Naive thymus-derived CD4-positive, alpha-beta T cell (primary cell): ENCODE measurements at regions of chr9 and their contacts with region 1.

Region 1: DNA sequence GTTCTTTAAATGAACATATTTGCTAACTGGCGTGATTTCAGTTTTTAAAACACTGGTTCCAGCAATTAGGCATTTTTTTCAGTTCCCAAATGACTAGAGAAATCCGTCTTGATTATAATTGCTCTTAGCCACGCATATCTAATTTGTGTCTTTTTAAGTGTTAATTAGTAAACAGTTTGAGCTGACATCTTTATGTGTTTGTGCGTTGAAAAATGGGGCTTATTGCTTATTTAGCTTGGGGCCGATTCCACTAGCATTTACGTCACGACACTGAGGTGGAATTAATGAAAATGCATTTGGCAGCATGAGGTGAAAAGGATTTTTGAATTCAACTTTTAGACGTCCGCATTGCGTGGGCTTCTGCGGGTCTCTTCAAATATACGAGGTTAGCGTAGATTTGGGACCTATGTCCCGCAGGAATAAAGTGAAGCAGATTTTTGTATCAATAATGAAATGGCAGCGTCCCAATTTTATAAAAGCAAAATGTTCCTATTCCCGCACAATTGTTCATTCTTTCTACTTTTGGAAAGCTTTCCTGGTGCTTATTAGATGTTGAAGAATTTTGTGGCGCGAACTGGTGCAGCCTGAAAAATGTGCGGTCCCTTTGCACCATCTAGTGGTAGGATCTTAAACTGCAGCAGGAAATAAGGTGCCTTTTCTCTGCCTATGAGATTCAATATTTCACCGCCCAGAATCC is 122.7 kb upstream of the LMX1B start:
- DNase-seq: peak in 7 of 9 donors; percentile 33 to 81 (median 66)
- ATAC-seq: peak; percentile 77
- H3K4me3 ChIP-seq: no peak overlapping the region
- H3K4me3 Mint-ChIP-seq: peak overlapping the region in 4 of 10 donors; percentile 13 to 66 (median 46)
- H3K27ac ChIP-seq: no peak overlapping the region
- H3K27ac Mint-ChIP-seq: no peak overlapping the region
- H3K4me1 ChIP-seq: peaks cover 5 to 6% of the 10 kb centered on the region in 2 donors
- H3K4me1 Mint-ChIP-seq: peaks cover 0 to 13% (median 6%) of the 10 kb centered on the region in 7 donors
- H3K27me3 ChIP-seq: no peaks in the 10 kb centered on the region
- H3K27me3 Mint-ChIP-seq: peaks cover 0 to 35% (median 0%) of the 10 kb centered on the region in 5 donors

Region 2: GRCh38 chr9:125558453-125559092 is 932.4 kb before region 1 on chr9:
- CTCF ChIA-PET with region 1: interaction called, 7 read pairs
- POLR2A ChIA-PET with region 1: no interaction called
- intact Hi-C with region 1: loop called (anchors 1 to 5 kb)
- DNase-seq: peak in 8 of 9 donors; percentile 18 to 63 (median 55)
- ATAC-seq: peak; percentile 78
- H3K4me3 ChIP-seq: no peak overlapping the region
- H3K4me3 Mint-ChIP-seq: no peak overlapping the region
- H3K27ac ChIP-seq: no peak overlapping the region
- H3K27ac Mint-ChIP-seq: peak overlapping the region in 1 of 9 donors; percentile 28
- H3K4me1 ChIP-seq: no peaks in the 10 kb centered on the region
- H3K4me1 Mint-ChIP-seq: peaks cover 0 to 19% (median 11%) of the 10 kb centered on the region in 7 donors
- H3K27me3 ChIP-seq: no peaks in the 10 kb centered on the region
- H3K27me3 Mint-ChIP-seq: no peaks in the 10 kb centered on the region

Region 3: GRCh38 chr9:126228781-126229444 is 262.1 kb before region 1 on chr9:
- CTCF ChIA-PET with region 1: interaction called, 3 read pairs
- POLR2A ChIA-PET with region 1: no interaction called
- intact Hi-C with region 1: loop called (anchors 1 to 2 kb)
- DNase-seq: peak; percentile 14 to 69 (median 57)
- ATAC-seq: peak; percentile 90
- H3K4me3 ChIP-seq: no peak overlapping the region
- H3K4me3 Mint-ChIP-seq: peak overlapping the region in 1 of 10 donors; percentile 18
- H3K27ac ChIP-seq: no peak overlapping the region
- H3K27ac Mint-ChIP-seq: peak overlapping the region in 1 of 9 donors; percentile 22
- H3K4me1 ChIP-seq: no peaks in the 10 kb centered on the region
- H3K4me1 Mint-ChIP-seq: peaks cover 0 to 8% (median 0%) of the 10 kb centered on the region in 7 donors
- H3K27me3 ChIP-seq: no peaks in the 10 kb centered on the region
- H3K27me3 Mint-ChIP-seq: peaks cover 19 to 49% (median 42%) of the 10 kb centered on the region in 5 donors

Region 4: DNA sequence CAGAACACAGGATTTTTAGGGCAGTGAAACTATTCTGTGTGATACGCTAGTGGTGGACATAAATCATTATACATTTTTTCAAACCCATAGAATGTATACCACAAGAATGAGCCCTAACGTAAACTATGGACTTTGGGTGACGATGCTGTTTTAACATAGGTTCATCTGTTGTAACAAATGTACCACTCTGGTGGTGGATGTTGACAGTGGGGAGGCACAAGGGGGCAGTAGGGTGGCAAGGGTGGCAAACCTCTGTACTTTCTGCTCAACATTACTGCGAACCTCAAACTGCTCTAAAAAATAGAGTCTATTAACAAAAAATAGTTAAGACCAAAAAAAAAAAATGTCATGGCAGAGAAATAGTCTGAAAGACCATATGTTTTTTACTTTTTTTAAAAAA is 173.5 kb before region 1 on chr9:
- CTCF ChIA-PET with region 1: interaction called, 55 read pairs
- POLR2A ChIA-PET with region 1: no interaction called
- intact Hi-C with region 1: loop called (anchors 1 to 5 kb)
- DNase-seq: peak in 6 of 9 donors; percentile 22 to 57 (median 49)
- ATAC-seq: peak; percentile 81
- H3K4me3 ChIP-seq: no peak overlapping the region
- H3K4me3 Mint-ChIP-seq: no peak overlapping the region
- H3K27ac ChIP-seq: no peak overlapping the region
- H3K27ac Mint-ChIP-seq: no peak overlapping the region
- H3K4me1 ChIP-seq: peaks cover 0 to 9% of the 10 kb centered on the region in 2 donors
- H3K4me1 Mint-ChIP-seq: peaks cover 0 to 13% (median 3%) of the 10 kb centered on the region in 7 donors
- H3K27me3 ChIP-seq: no peaks in the 10 kb centered on the region
- H3K27me3 Mint-ChIP-seq: peaks cover 0 to 29% (median 0%) of the 10 kb centered on the region in 5 donors

Region 5: GRCh38 chr9:126411225-126411947 is 79.6 kb before region 1 on chr9:
- CTCF ChIA-PET with region 1: interaction called, 9 read pairs
- POLR2A ChIA-PET with region 1: no interaction called
- intact Hi-C with region 1: loop called in 1 of 2 experiments (anchors 5 kb)
- DNase-seq: peak in 7 of 9 donors; percentile 64 to 88 (median 78)
- ATAC-seq: peak; percentile 90
- H3K4me3 ChIP-seq: peak overlapping the region; percentile 57
- H3K4me3 Mint-ChIP-seq: peak overlapping the region; percentile 70 to 88 (median 83)
- H3K27ac ChIP-seq: peak overlapping the region; percentile 64
- H3K27ac Mint-ChIP-seq: peak overlapping the region; percentile 80 to 95 (median 89)
- H3K4me1 ChIP-seq: peaks cover 24 to 27% of the 10 kb centered on the region in 2 donors
- H3K4me1 Mint-ChIP-seq: peaks cover 31 to 54% (median 45%) of the 10 kb centered on the region in 7 donors
- H3K27me3 ChIP-seq: no peaks in the 10 kb centered on the region
- H3K27me3 Mint-ChIP-seq: peaks cover 0 to 2% (median 0%) of the 10 kb centered on the region in 5 donors

Region 6: GRCh38 chr9:126457890-126458289 is 33.1 kb before region 1 on chr9:
- CTCF ChIA-PET with region 1: no interaction called
- POLR2A ChIA-PET with region 1: no interaction called
- intact Hi-C with region 1: no loop called
- DNase-seq: no peak
- ATAC-seq: no peak
- H3K4me3 ChIP-seq: no peak overlapping the region
- H3K4me3 Mint-ChIP-seq: no peak overlapping the region
- H3K27ac ChIP-seq: no peak overlapping the region
- H3K27ac Mint-ChIP-seq: no peak overlapping the region
- H3K4me1 ChIP-seq: no peaks in the 10 kb centered on the region
- H3K4me1 Mint-ChIP-seq: peaks cover 0 to 5% (median 0%) of the 10 kb centered on the region in 7 donors
- H3K27me3 ChIP-seq: no peaks in the 10 kb centered on the region
- H3K27me3 Mint-ChIP-seq: peaks cover 0 to 26% (median 0%) of the 10 kb centered on the region in 5 donors

Region 7: DNA sequence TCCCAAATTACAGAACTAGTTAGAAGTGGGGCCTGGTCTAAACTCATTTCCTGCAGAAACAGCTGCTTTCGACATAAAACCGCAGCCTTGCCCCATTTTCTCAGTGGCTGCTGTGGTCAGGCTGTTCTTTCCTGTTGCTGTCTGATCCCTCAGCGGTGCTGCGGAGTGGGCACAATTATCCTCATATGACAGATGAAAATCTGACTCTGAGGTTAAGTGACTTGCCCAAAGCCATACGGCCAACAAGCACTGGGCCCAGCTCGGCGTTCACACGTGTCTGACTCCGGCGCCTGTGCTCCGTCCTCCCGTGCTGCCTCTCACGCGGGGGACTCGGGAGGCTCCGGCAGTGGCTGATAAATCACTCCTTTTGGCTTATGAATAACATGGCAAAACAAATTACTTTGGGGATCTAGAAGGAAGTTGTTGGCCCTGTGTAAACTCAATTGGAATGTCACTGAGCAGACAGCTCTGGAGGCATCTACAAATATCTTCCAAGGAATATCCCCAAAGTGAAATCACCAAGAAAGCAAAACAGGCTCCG is 19.9 kb before region 1 on chr9:
- CTCF ChIA-PET with region 1: interaction called, 14 read pairs
- POLR2A ChIA-PET with region 1: interaction called, 13 read pairs
- intact Hi-C with region 1: loop called in 1 of 2 experiments (anchors 1 kb)
- DNase-seq: peak; percentile 39 to 80 (median 66)
- ATAC-seq: peak; percentile 90
- H3K4me3 ChIP-seq: peak overlapping the region; percentile 6
- H3K4me3 Mint-ChIP-seq: peak overlapping the region; percentile 75 to 85 (median 82)
- H3K27ac ChIP-seq: peak overlapping the region; percentile 40
- H3K27ac Mint-ChIP-seq: peak overlapping the region; percentile 76 to 94 (median 88)
- H3K4me1 ChIP-seq: peaks cover 51 to 61% of the 10 kb centered on the region in 2 donors
- H3K4me1 Mint-ChIP-seq: peaks cover 56 to 83% (median 75%) of the 10 kb centered on the region in 7 donors
- H3K27me3 ChIP-seq: no peaks in the 10 kb centered on the region
- H3K27me3 Mint-ChIP-seq: peaks cover 0 to 58% (median 0%) of the 10 kb centered on the region in 5 donors

Region 8: GRCh38 chr9:126511411-126511810 is 20.4 kb after region 1 on chr9:
- CTCF ChIA-PET with region 1: no interaction called
- POLR2A ChIA-PET with region 1: no interaction called
- intact Hi-C with region 1: no loop called
- DNase-seq: no peak
- ATAC-seq: no peak
- H3K4me3 ChIP-seq: no peak overlapping the region
- H3K4me3 Mint-ChIP-seq: no peak overlapping the region
- H3K27ac ChIP-seq: no peak overlapping the region
- H3K27ac Mint-ChIP-seq: no peak overlapping the region
- H3K4me1 ChIP-seq: peaks cover 0 to under 1% of the 10 kb centered on the region in 2 donors
- H3K4me1 Mint-ChIP-seq: peaks cover 0 to 13% (median 6%) of the 10 kb centered on the region in 7 donors
- H3K27me3 ChIP-seq: peaks cover 0 to 4% of the 10 kb centered on the region in 2 donors
- H3K27me3 Mint-ChIP-seq: peaks cover 37 to 57% (median 40%) of the 10 kb centered on the region in 5 donors